Sigmoid colon (tissue), 7 donors: ENCODE measurements at regions of chr12 and their contacts with region 1.

Region 1: DNA sequence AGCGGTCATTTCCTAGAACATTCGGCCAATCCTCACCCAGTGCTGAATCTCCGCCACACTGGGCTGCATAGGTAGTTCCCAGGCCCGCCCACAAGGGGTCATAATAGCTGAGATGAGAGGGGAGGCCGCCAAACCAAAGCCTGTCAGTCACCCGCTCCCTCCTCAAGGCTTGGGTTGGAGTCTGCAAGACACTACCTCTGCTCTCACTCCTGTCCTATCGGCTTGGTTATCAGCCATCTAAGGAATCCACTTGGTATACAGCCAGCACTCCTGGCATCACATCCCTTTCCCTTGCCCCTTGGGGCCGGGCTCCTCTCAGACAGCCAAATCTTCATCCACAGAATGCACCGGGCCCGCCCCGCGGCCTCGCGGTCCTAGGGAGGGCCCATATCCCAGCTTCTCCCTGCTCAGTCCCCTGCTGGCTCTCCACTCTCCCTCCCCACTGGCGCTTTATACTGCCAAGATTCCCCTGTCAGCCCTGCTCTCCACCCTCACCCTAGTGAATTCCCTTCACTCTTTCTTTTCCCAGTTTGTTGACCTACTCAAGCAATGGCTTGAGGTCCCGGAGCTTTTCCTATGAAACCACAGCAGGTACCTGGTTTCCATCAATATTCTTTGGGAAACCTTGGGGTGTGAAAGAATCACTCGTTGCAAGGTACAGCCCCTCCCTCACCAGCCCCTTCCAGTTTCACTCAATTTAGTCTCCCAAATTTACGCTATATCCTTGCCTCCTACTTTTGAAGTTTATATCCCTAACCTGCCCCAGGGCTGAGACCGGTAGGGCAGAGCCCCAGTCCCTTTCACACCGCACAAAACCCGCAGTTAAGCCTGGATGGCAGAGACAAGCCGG is 1.4 kb downstream of the IFFO1 start:
- DNase-seq: peak; percentile 89
- H3K4me3 ChIP-seq: peak overlapping the region; percentile 66 to 98 (median 90)
- H3K27ac ChIP-seq: peak overlapping the region; percentile 88 to 95 (median 94)
- H3K4me1 ChIP-seq: peaks cover 0 to 68% (median 62%) of the 10 kb centered on the region in 4 donors
- H3K27me3 ChIP-seq: no peaks in the 10 kb centered on the region
- CTCF ChIP-seq: peak in 3 of 4 experiments; percentile 30 to 51 (median 34)
- EP300 ChIP-seq: no peak
- POLR2A ChIP-seq: no peak

Region 2: GRCh38 chr12:6215932-6216494 is 338.4 kb before region 1 on chr12:
- intact Hi-C with region 1: loop called (anchors 10 kb)
- DNase-seq: peak; percentile 96
- H3K4me3 ChIP-seq: peak overlapping the region in 1 of 4 donors; percentile 14
- H3K27ac ChIP-seq: peak overlapping the region; percentile 95 to 100 (median 98)
- H3K4me1 ChIP-seq: peaks cover 0 to 100% (median 98%) of the 10 kb centered on the region in 4 donors
- H3K27me3 ChIP-seq: no peaks in the 10 kb centered on the region
- CTCF ChIP-seq: no peak
- EP300 ChIP-seq: peak in 1 of 4 donors; percentile 56
- POLR2A ChIP-seq: peak in 1 of 2 donors; percentile 8

Region 3: GRCh38 chr12:6335451-6336078 is 218.8 kb before region 1 on chr12:
- intact Hi-C with region 1: loop called (anchors 5 kb)
- DNase-seq: peak; percentile 92
- H3K4me3 ChIP-seq: peak overlapping the region; percentile 29 to 88 (median 65)
- H3K27ac ChIP-seq: peak overlapping the region; percentile 93 to 98 (median 97)
- H3K4me1 ChIP-seq: peaks cover 0 to 84% (median 72%) of the 10 kb centered on the region in 4 donors
- H3K27me3 ChIP-seq: no peaks in the 10 kb centered on the region
- CTCF ChIP-seq: peak in 3 of 4 experiments; percentile 39 to 58 (median 48)
- EP300 ChIP-seq: no peak
- POLR2A ChIP-seq: no peak

Region 4: GRCh38 chr12:6443361-6443983 is 110.9 kb before region 1 on chr12:
- intact Hi-C with region 1: no loop called
- DNase-seq: peak; percentile 36
- H3K4me3 ChIP-seq: no peak overlapping the region
- H3K27ac ChIP-seq: no peak overlapping the region
- H3K4me1 ChIP-seq: peaks cover 0 to 5% (median under 1%) of the 10 kb centered on the region in 4 donors
- H3K27me3 ChIP-seq: no peaks in the 10 kb centered on the region
- CTCF ChIP-seq: no peak
- EP300 ChIP-seq: no peak
- POLR2A ChIP-seq: no peak

Region 5: GRCh38 chr12:6493497-6494257 is 60.7 kb before region 1 on chr12 and contains the start of gene NCAPD2:
- intact Hi-C with region 1: loop called (anchors 5 kb)
- DNase-seq: peak; percentile 98
- H3K4me3 ChIP-seq: peak within 1 kb of the TSS; percentile 60 to 79 (median 70)
- H3K27ac ChIP-seq: peak within 1 kb of the TSS; percentile 94 to 97 (median 96)
- H3K4me1 ChIP-seq: peaks cover 0 to 27% (median 20%) of the 10 kb centered on the region in 4 donors
- H3K27me3 ChIP-seq: no peaks in the 10 kb centered on the region
- CTCF ChIP-seq: peak; percentile 50 to 81 (median 74)
- EP300 ChIP-seq: no peak
- POLR2A ChIP-seq: no peak
- total RNA-seq, gene NCAPD2: 11.8 to 89.5 (median 12.6) TPM